ENCODE measurements at regions of chr18 and their contacts with region 1.

Region 1: GRCh38 chr18:74551936-74552555 is 17.7 kb downstream of the CNDP1 start:
- DNase-seq: peak; percentile 92
- H3K4me3 Mint-ChIP-seq: no peak overlapping the region
- H3K27ac Mint-ChIP-seq: peak overlapping the region; percentile 59
- H3K4me1 Mint-ChIP-seq: peaks cover 9% of the 10 kb centered on the region
- H3K27me3 Mint-ChIP-seq: peaks cover 4% of the 10 kb centered on the region

Region 2: DNA sequence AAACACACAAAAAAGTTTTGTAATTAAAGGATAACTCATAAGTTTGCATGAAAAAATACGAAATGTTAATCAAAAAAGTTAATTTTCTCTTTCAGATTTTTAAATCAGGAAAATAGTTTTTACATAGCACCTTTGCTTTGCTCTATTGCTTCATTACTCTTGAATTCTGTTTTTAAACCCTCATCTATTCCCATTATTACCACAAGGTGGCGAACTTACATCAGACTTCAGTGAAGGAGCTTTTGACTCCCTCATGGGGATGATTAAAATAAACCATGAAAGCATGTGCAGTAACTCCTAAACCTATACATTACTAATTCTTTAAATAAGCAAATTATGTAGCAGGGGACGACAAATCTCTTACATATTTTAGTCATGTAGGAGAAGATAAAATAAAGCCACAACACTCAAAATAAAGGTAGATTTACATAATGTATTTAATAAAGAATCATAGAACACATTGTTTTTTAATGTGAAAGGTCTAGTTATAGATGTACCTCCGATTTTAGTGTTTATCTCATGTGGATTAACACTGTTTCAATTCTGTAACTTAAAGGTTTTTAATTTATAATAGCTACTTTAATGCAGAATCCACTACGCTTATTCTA is 1789.4 kb before region 1 on chr18:
- intact Hi-C with region 1: loop called (anchors 5 kb)
- DNase-seq: peak; percentile 65
- H3K4me3 Mint-ChIP-seq: no peak overlapping the region
- H3K27ac Mint-ChIP-seq: no peak overlapping the region
- H3K4me1 Mint-ChIP-seq: no peaks in the 10 kb centered on the region
- H3K27me3 Mint-ChIP-seq: no peaks in the 10 kb centered on the region

Region 3: DNA sequence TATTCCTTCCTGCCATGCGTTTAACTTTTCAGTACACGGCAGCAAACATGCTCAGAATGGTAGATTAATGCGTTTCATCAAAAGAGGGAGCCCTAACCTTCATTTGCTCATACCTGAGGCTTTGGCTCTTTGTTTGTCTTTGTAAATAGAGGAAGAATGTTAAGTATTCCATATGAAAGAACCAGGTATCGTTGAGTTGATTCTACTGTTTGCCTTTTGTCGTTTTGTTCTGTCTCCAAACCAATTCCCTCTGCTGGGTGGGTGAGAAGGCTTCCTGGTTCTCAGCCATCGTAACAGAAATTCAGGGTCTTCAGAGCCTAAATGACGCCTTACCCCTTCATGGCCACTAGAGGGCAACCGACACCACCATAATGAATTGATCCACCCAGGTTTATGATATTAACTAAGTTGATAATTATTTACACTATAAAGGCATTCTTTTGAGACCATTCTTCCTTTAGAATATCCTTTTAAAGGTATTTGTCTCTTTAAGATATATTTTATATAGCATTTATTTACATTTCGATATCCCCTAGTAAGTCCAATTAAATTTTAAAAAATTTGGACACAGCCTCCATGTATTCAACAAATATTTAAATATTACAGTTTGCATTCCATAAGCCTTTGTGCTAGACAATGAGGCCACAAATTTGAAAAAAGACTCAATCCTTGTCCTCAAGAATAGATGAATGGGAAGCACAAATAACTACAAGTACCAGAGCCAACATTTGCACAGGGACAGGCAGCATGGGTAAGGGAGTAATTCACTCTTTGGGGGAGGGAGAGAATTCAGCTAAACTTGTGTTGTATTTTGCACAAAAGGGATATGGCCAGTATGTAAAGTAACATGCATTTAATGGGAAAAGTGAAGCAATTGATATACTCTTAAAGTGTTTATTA is 355.6 kb before region 1 on chr18:
- intact Hi-C with region 1: loop called (anchors 1 kb)
- DNase-seq: peak; percentile 82
- H3K4me3 Mint-ChIP-seq: peak overlapping the region; percentile 81
- H3K27ac Mint-ChIP-seq: peak overlapping the region; percentile 11
- H3K4me1 Mint-ChIP-seq: peaks cover 2% of the 10 kb centered on the region
- H3K27me3 Mint-ChIP-seq: peaks cover 2% of the 10 kb centered on the region

Region 4: DNA sequence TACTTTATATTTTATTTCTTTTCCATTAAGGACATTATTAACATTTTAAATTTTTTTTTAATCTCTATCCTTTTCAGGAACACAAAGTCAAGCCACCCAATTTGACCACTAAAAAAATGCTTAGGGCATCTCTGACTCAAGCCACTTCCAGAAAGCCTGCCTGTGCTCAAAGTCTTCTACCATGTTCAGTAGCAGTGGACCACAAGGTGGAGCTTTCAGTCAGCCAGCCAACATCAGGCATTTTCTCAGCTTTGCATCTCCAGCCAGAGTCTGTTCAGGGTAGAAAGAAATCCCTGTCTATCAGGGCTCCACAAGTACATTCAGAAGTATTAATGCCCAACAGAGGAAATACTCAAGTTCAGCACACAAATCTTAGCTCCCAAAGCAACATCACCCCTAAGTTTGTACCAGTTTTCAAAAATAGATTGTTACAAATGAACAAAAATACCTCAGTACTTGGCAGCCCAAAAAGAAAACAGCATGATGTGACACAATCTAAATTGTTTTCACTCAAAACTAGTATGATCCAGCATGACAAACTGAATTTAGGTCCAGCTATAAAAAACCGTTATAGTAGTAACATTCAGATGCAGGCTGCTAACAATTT is 198.8 kb before region 1 on chr18:
- intact Hi-C with region 1: loop called (anchors 1 kb)
- DNase-seq: peak; percentile 88
- H3K4me3 Mint-ChIP-seq: no peak overlapping the region
- H3K27ac Mint-ChIP-seq: no peak overlapping the region
- H3K4me1 Mint-ChIP-seq: peaks cover 20% of the 10 kb centered on the region
- H3K27me3 Mint-ChIP-seq: peaks cover 19% of the 10 kb centered on the region

Measured in activated CD4-positive, alpha-beta T cell treated with anti-CD3 and anti-CD28 coated beads, Interleukin-2, amount 10 ng/mL, durations not matched to agents 24 days and 14 days (primary cell).